Activated CD8-positive, alpha-beta memory T cell treated with anti-CD3 and anti-CD28 coated beads, Interleukin-2, amount 10 ng/mL, durations not matched to agents 7 days and 5 days (primary cell): ENCODE measurements at regions of chr17 and their contacts with region 1.

Region 1: GRCh38 chr17:45410144-45411091 is 22.3 kb downstream of the ARHGAP27 start:
- DNase-seq: peak; percentile 79
- ATAC-seq: peak; percentile 84
- H3K4me3 Mint-ChIP-seq: peak overlapping the region; percentile 98
- H3K27ac Mint-ChIP-seq: peak overlapping the region; percentile 99
- H3K4me1 Mint-ChIP-seq: peaks cover 50% of the 10 kb centered on the region
- H3K27me3 Mint-ChIP-seq: no peaks in the 10 kb centered on the region

Region 2: GRCh38 chr17:45428050-45428617 is 17.7 kb after region 1 on chr17:
- CTCF ChIA-PET with region 1: interaction called, 10 read pairs
- DNase-seq: peak; percentile 86
- ATAC-seq: peak; percentile 54
- H3K4me3 Mint-ChIP-seq: peak overlapping the region; percentile 63
- H3K27ac Mint-ChIP-seq: peak overlapping the region; percentile 81
- H3K4me1 Mint-ChIP-seq: peaks cover 24% of the 10 kb centered on the region
- H3K27me3 Mint-ChIP-seq: no peaks in the 10 kb centered on the region

Region 3: DNA sequence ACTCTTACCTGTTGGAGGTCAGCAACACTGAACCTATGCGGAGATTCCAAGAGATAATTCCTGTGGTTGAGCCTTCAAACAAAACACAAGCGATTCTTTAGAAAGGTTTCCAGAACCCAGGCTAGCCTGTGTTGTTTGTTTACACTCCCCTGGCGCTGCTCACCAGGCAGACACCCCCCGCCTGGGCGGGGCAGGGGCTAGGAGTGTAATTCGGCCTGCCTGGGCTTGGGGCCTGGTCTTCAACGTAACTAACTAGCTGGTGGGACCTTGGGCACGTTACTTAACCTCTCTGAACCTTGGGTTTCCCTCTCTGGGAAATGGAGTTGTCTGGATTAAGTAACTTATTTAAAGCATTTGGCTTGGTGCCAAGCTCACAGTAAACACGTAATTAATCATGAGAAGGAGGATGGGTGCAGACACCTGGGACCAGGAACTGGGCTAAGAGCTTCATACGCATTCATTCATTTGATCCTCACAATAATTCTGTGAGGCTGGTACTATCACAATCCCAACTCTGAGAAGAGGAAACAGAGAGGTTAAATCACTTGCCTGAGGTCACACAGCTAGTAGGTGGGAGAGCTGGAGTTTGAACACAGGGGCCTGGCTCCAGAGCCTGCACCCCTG is 29.8 kb after region 1 on chr17:
- CTCF ChIA-PET with region 1: no interaction called
- DNase-seq: no peak
- ATAC-seq: no peak
- H3K4me3 Mint-ChIP-seq: no peak overlapping the region
- H3K27ac Mint-ChIP-seq: peak overlapping the region; percentile 68
- H3K4me1 Mint-ChIP-seq: peaks cover 18% of the 10 kb centered on the region
- H3K27me3 Mint-ChIP-seq: no peaks in the 10 kb centered on the region